ENCODE measurements at regions of chr6 and their contacts with region 1.

Region 1: DNA sequence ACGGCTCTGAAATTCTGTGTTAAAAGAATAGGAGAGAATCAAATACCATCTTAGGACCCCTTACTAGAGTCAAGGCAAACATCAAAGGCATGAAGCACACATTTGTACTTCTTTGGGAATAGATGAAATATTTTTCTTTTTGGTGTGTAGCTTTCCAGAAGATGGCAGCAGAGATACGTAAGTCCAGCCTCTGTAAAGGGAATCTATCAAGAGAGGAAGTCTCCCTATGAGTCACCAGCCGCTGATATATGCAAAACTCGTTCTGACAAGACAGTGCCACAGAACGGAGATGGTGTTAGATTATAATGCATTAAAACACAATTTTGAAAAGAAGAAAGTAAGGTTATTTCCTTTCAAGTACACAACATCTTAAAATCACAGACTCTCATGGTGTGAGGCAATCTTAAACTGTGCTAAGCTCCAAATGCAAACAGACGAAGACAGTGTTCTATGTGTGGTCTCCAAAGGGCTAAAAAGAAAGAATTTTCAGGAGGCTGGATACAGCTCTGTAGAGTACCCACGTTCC is 120.0 kb upstream of the AGPAT4 start:
- DNase-seq: peak; percentile 72 to 86 (median 78)
- ATAC-seq: peak; percentile 98
- H3K4me3 ChIP-seq: no peak overlapping the region
- H3K27ac ChIP-seq: no peak overlapping the region
- H3K4me1 ChIP-seq: peaks cover 0 to 4% of the 10 kb centered on the region in 2 experiments; a peak in 3 of 5 replicates
- H3K27me3 ChIP-seq: peaks cover 20 to 27% of the 10 kb centered on the region in 2 experiments
- CTCF ChIP-seq: peak; percentile 64 to 94 (median 71)
- EP300 ChIP-seq: no peak
- POLR2A ChIP-seq: no peak
- RAD21 ChIP-seq: peak; percentile 94 to 97

Region 2: GRCh38 chr6:160750276-160750689 is 643.6 kb before region 1 on chr6:
- CTCF ChIA-PET with region 1: no interaction called
- POLR2A ChIA-PET with region 1: no interaction called
- in situ Hi-C with region 1: no loop called
- intact Hi-C with region 1: no loop called
- DNase-seq: peak; percentile 41 to 65 (median 45)
- ATAC-seq: peak; percentile 91
- H3K4me3 ChIP-seq: no peak overlapping the region
- H3K27ac ChIP-seq: no peak overlapping the region
- H3K4me1 ChIP-seq: no peaks in the 10 kb centered on the region; a peak in 1 of 5 replicates
- H3K27me3 ChIP-seq: no peaks in the 10 kb centered on the region
- CTCF ChIP-seq: peak; percentile 73 to 92 (median 80)
- EP300 ChIP-seq: no peak
- POLR2A ChIP-seq: no peak
- RAD21 ChIP-seq: peak; percentile 69 to 82

Region 3: GRCh38 chr6:161076181-161076677 is 317.7 kb before region 1 on chr6:
- CTCF ChIA-PET with region 1: no interaction called
- POLR2A ChIA-PET with region 1: no interaction called
- in situ Hi-C with region 1: no loop called
- intact Hi-C with region 1: no loop called
- DNase-seq: no peak
- ATAC-seq: no peak
- H3K4me3 ChIP-seq: no peak overlapping the region
- H3K27ac ChIP-seq: no peak overlapping the region
- H3K4me1 ChIP-seq: no peaks in the 10 kb centered on the region; a peak in 1 of 5 replicates
- H3K27me3 ChIP-seq: no peaks in the 10 kb centered on the region
- CTCF ChIP-seq: no peak
- EP300 ChIP-seq: no peak
- POLR2A ChIP-seq: no peak
- RAD21 ChIP-seq: no peak

Region 4: DNA sequence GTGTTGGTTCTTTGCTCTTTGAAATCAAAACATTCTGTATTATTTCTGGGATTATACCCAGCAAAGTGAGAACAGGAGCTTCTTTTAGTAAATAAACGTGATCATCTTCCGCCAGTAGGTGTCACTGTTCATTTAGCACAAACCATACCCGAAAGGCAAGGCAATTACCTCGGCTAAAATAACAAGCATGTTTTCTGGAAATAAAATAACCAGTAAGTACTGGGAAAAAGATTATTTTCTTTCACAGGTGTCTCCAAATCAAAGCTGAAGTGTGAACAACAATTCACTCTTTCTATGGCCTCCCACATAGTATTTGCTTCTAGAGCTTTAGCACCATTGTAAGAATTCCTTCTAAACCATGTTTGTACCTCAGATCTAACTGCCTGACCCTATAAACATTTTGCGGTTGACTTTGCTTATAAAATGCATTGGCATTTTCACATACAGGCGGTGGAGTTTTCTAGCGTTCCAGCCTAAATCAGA is 24.6 kb after region 1 on chr6:
- CTCF ChIA-PET with region 1: no interaction called
- POLR2A ChIA-PET with region 1: no interaction called
- in situ Hi-C with region 1: no loop called
- intact Hi-C with region 1: loop called (anchors 1 kb)
- DNase-seq: peak; percentile 57 to 81 (median 63)
- ATAC-seq: peak; percentile 87
- H3K4me3 ChIP-seq: no peak overlapping the region
- H3K27ac ChIP-seq: no peak overlapping the region
- H3K4me1 ChIP-seq: peaks cover 3 to 8% of the 10 kb centered on the region in 2 experiments; a peak in 4 of 5 replicates
- H3K27me3 ChIP-seq: peaks cover 39 to 55% of the 10 kb centered on the region in 2 experiments; a peak in 4 of 5 replicates
- CTCF ChIP-seq: peak; percentile 62 to 85 (median 76); a peak in 5 of 6 replicates
- EP300 ChIP-seq: no peak
- POLR2A ChIP-seq: no peak
- RAD21 ChIP-seq: peak; percentile 77 to 85

Region 5: DNA sequence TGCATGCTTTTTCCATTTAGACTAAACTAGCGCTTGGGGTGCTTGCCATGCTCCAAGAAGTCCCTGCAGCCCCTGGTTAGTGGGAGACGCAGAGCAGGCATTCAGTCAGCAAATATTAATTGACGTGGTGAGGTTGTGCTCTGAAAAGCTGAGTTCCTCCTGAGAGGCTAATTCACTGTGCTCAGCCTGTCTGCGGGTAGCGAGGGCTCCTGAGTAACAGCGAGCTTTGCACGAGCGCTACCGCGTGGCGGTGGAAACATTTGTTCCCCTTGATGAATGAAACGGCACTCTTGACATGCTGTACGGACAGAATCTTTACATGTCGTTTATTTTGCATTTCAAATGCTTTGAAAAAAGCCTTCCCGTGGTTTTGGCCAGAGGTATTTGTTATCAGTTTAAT is 50.6 kb after region 1 on chr6:
- CTCF ChIA-PET with region 1: interaction called, 3 read pairs
- POLR2A ChIA-PET with region 1: no interaction called
- in situ Hi-C with region 1: no loop called
- intact Hi-C with region 1: loop called (anchors 1 kb)
- DNase-seq: peak; percentile 26 to 66 (median 36)
- ATAC-seq: peak; percentile 88
- H3K4me3 ChIP-seq: no peak overlapping the region
- H3K27ac ChIP-seq: no peak overlapping the region
- H3K4me1 ChIP-seq: peaks cover 0 to 4% of the 10 kb centered on the region in 2 experiments; a peak in 3 of 5 replicates
- H3K27me3 ChIP-seq: peaks cover 57 to 71% of the 10 kb centered on the region in 2 experiments
- CTCF ChIP-seq: peak; percentile 48 to 51 (median 48); a peak in 4 of 6 replicates
- EP300 ChIP-seq: no peak
- POLR2A ChIP-seq: no peak
- RAD21 ChIP-seq: peak in 1 of 2 experiments; percentile 59; a peak in 3 of 4 replicates

Region 6: GRCh38 chr6:161498359-161498758 is 104.5 kb after region 1 on chr6:
- CTCF ChIA-PET with region 1: interaction called, 6 read pairs
- POLR2A ChIA-PET with region 1: interaction called, 3 read pairs
- in situ Hi-C with region 1: no loop called
- intact Hi-C with region 1: loop called (anchors 1 kb)
- DNase-seq: peak; percentile 19 to 52 (median 32)
- ATAC-seq: peak; percentile 94
- H3K4me3 ChIP-seq: no peak overlapping the region
- H3K27ac ChIP-seq: no peak overlapping the region
- H3K4me1 ChIP-seq: no peaks in the 10 kb centered on the region
- H3K27me3 ChIP-seq: peaks cover 0 to 3% of the 10 kb centered on the region in 2 experiments; a peak in 2 of 5 replicates
- CTCF ChIP-seq: peak; percentile 57 to 65 (median 59)
- EP300 ChIP-seq: no peak
- POLR2A ChIP-seq: no peak
- RAD21 ChIP-seq: peak; percentile 60 to 75

Region 7: GRCh38 chr6:161557333-161558107 is 163.6 kb after region 1 on chr6:
- CTCF ChIA-PET with region 1: no interaction called
- POLR2A ChIA-PET with region 1: no interaction called
- in situ Hi-C with region 1: no loop called
- intact Hi-C with region 1: no loop called
- DNase-seq: peak in 1 of 4 experiments; percentile 9
- ATAC-seq: peak; percentile 71; the same call in 2 of the 3 replicates
- H3K4me3 ChIP-seq: no peak overlapping the region
- H3K27ac ChIP-seq: no peak overlapping the region
- H3K4me1 ChIP-seq: no peaks in the 10 kb centered on the region
- H3K27me3 ChIP-seq: no peaks in the 10 kb centered on the region
- CTCF ChIP-seq: peak; percentile 17 to 28 (median 22); a peak in 1 of 6 replicates
- EP300 ChIP-seq: no peak
- POLR2A ChIP-seq: no peak
- RAD21 ChIP-seq: peak in 1 of 2 experiments; percentile 36; a peak in 2 of 4 replicates

Region 8: DNA sequence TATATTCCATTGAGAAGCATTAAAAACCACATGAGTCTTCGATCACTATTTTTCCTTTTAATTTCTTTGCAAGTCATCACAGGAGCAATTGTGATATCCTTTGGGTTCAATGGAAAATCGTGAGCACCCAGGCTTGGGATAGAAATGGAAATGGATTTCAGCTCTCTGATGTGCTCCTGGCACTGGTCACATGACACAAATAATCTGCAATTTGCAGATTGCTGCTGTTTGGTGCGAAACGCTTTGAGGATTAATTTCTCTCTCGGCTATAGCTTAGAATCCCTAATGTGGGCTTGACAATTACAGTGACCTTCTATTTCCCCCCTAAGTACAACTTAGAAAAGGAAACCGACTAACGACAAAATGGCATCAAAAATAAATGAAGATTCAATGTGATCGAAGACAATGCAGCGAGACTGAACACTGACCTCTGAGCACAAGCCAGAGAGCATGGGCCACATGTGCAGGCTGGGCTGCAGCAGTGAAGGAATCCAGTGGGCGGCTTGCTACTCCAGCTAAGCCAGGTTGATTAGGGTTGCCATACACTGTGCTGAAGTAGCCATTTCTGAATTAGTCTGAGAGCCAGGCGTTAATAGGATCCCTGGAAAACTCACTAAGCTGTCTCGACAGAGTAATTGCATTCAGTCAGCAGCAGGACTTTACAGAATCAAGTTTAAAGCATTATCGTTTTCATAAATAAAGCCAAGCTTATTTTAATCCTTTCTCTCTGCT is 181.8 kb after region 1 on chr6:
- CTCF ChIA-PET with region 1: no interaction called
- POLR2A ChIA-PET with region 1: no interaction called
- in situ Hi-C with region 1: no loop called
- intact Hi-C with region 1: no loop called
- DNase-seq: no peak
- ATAC-seq: no peak
- H3K4me3 ChIP-seq: no peak overlapping the region
- H3K27ac ChIP-seq: no peak overlapping the region
- H3K4me1 ChIP-seq: no peaks in the 10 kb centered on the region
- H3K27me3 ChIP-seq: peaks cover 3 to 8% of the 10 kb centered on the region in 2 experiments; a peak in 3 of 5 replicates
- CTCF ChIP-seq: no peak
- EP300 ChIP-seq: no peak
- POLR2A ChIP-seq: no peak
- RAD21 ChIP-seq: no peak

Region 9: DNA sequence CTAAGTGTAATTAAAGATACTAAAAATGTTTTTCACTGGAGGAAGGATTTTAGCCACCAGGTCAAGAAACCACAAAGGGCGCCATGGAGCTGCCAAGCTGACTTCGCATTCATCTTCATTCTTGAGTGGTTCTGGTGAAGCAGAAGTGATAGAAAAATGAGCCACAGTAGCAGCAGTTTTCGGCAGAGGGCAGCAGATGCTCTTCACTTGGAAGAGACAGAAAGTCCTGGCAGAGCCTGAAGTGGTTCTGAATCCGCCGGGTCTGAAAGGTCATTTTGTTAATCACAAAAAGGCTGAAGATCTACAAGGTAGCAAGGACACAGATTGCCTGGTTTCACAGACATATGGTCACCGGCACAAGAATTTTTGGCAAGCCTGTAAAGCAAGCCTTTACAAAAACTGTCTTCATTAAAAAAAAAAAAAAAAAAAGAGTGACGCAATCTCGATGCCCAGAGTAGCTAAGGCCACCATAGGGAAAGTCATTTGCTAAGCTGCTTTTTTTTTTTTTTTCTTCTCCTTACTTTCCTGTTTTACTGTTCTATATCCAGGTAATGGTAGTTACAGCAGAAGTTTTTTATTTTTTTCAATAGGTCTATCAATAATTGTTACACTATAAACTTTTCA is 225.0 kb after region 1 on chr6:
- CTCF ChIA-PET with region 1: no interaction called
- POLR2A ChIA-PET with region 1: no interaction called
- in situ Hi-C with region 1: no loop called
- intact Hi-C with region 1: loop called (anchors 5 kb)
- DNase-seq: peak in 3 of 4 experiments; percentile 16 to 51 (median 37)
- ATAC-seq: peak; percentile 92
- H3K4me3 ChIP-seq: no peak overlapping the region
- H3K27ac ChIP-seq: no peak overlapping the region
- H3K4me1 ChIP-seq: no peaks in the 10 kb centered on the region
- H3K27me3 ChIP-seq: no peaks in the 10 kb centered on the region
- CTCF ChIP-seq: peak; percentile 54 to 59 (median 56)
- EP300 ChIP-seq: no peak
- POLR2A ChIP-seq: no peak
- RAD21 ChIP-seq: peak; percentile 27 to 58

Region 10: DNA sequence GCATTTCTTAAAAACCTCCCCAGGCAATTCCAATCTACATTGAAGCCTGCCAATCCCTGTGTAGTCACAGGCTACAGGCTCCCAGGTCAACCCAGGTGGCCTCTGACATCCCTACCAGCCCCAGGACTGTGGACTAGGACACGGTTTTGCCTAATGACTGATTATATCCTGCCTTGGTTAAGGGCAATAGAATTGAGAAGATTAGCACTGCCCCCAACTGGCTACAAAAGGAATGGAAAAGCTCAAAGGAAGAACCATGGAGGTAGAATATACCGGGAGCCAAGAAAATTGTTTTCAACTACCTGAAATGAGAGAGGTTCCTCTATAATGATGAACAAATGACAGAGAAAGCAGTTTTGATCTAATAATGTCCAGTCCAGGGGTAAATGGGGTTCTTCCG is 301.1 kb after region 1 on chr6:
- CTCF ChIA-PET with region 1: interaction called, 5 read pairs
- POLR2A ChIA-PET with region 1: no interaction called
- in situ Hi-C with region 1: loop called (anchors 10 kb)
- intact Hi-C with region 1: loop called (anchors 1 kb)
- DNase-seq: peak; percentile 22 to 49 (median 34)
- ATAC-seq: peak; percentile 94
- H3K4me3 ChIP-seq: no peak overlapping the region
- H3K27ac ChIP-seq: no peak overlapping the region
- H3K4me1 ChIP-seq: no peaks in the 10 kb centered on the region
- H3K27me3 ChIP-seq: no peaks in the 10 kb centered on the region
- CTCF ChIP-seq: peak; percentile 50 to 69 (median 69); a peak in 5 of 6 replicates
- EP300 ChIP-seq: no peak
- POLR2A ChIP-seq: no peak
- RAD21 ChIP-seq: peak; percentile 63 to 66